ENCODE measurements at regions of chr12 and their contacts with region 1.

Region 1: DNA sequence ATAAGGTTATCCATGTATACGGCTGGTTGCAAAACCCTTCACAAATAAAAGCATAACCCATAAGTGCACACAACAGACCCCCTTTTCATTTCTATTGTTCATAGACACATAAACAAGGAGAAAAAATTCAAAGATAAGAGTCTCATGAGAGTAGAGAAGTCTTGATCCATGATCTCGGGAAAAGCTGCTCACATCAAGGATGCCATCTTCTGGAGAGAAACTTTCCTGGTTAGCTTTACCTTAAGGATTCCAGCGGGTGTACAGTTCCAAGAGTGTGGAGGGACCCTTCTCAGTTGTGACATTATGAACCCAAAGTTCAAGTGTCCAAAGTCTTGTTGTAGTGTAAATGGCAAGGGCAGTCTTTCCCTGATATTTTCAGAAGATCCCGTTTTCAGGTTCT is 144.5 kb downstream of the LLPH start:
- DNase-seq: no peak
- H3K4me3 Mint-ChIP-seq: no peak overlapping the region
- H3K27ac Mint-ChIP-seq: no peak overlapping the region
- H3K4me1 Mint-ChIP-seq: no peaks in the 10 kb centered on the region
- H3K27me3 Mint-ChIP-seq: no peaks in the 10 kb centered on the region

Region 2: GRCh38 chr12:65602610-65603295 is 383.3 kb before region 1 on chr12:
- CTCF ChIA-PET with region 1: interaction called, 3 read pairs
- POLR2A ChIA-PET with region 1: no interaction called
- intact Hi-C with region 1: loop called (anchors 1 kb)
- DNase-seq: peak; percentile 56
- H3K4me3 Mint-ChIP-seq: no peak overlapping the region
- H3K27ac Mint-ChIP-seq: no peak overlapping the region
- H3K4me1 Mint-ChIP-seq: peaks cover 1% of the 10 kb centered on the region
- H3K27me3 Mint-ChIP-seq: peaks cover 5% of the 10 kb centered on the region

Region 3: DNA sequence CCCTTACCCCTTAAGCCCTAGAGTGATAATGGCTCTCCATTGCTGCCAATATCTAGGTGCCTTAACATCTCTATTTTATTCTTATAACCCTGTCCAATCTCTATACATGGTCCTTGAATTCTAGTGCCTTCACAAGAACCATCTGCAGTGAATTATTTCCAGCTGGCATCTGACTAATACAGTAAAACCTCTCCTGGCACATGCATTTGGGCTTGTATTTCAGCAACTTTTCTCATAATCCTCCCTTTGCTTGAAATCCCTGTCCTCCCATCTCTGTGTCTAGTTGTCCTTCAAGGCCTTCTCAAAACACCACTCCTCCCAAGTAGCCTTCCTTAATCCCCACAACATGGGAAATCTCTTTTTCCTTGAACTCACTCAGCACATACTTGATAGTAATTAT is 176.0 kb before region 1 on chr12:
- CTCF ChIA-PET with region 1: no interaction called
- POLR2A ChIA-PET with region 1: no interaction called
- intact Hi-C with region 1: no loop called
- DNase-seq: no peak
- H3K4me3 Mint-ChIP-seq: no peak overlapping the region
- H3K27ac Mint-ChIP-seq: no peak overlapping the region
- H3K4me1 Mint-ChIP-seq: no peaks in the 10 kb centered on the region
- H3K27me3 Mint-ChIP-seq: peaks cover 14% of the 10 kb centered on the region

Region 4: DNA sequence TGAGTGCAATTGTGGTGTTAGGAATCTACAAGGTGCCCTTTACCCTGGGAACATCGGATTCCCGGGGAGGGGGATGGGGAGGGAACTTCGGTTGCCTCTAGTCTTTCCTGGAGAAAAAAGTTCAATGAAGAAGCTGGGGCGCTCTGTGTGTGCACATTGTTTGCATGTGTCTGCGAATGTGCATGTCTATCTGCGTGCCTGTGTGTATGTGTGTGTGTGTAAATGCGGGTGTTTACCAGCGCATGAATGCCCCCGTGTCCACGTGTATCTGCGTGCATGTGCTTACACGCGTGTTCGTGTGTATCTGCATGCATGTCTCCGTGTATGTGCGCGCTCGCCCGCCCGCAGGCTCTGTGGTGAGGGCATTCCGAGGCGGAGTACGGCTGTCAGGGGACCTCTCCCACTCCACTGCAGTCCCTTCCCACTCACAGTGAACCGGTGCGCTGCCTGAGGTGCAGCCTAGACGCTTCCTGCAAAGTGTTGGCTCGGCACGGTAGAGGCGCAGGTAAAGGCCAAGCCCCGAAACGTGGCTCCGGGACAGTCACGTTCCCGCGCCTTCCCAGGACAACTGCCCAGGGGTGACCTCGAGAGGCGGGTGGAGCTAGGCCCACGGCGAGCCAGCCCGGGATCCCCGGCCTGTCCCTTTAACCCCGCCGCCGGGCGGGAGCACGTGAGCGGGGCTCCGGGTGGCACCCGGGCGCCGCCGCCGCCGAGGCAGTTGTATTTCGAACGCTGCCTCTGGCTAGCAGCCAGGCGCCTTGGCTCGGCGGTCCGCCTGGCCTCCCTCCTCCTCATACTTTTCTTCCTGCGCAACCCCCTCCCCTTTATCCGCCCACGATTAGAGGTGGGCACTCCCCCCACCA is 162.3 kb before region 1 on chr12:
- CTCF ChIA-PET with region 1: no interaction called
- POLR2A ChIA-PET with region 1: no interaction called
- intact Hi-C with region 1: loop called (anchors 10 kb)
- DNase-seq: peak; percentile 9
- H3K4me3 Mint-ChIP-seq: peak overlapping the region; percentile 33
- H3K27ac Mint-ChIP-seq: no peak overlapping the region
- H3K4me1 Mint-ChIP-seq: peaks cover 12% of the 10 kb centered on the region
- H3K27me3 Mint-ChIP-seq: peaks cover 49% of the 10 kb centered on the region